Calu3 (cell line): ENCODE measurements at regions of chr3 and their contacts with region 1.

Region 1: GRCh38 chr3:48465531-48466378 is 19.2 kb downstream of the ATRIP start:
- DNase-seq: peak; percentile 97
- H3K4me3 Mint-ChIP-seq: peak overlapping the region; percentile 74
- H3K27ac Mint-ChIP-seq: peak overlapping the region; percentile 100
- H3K4me1 Mint-ChIP-seq: peaks cover 18% of the 10 kb centered on the region
- H3K27me3 Mint-ChIP-seq: no peaks in the 10 kb centered on the region
- CTCF ChIP-seq: peak; percentile 73

Region 2: DNA sequence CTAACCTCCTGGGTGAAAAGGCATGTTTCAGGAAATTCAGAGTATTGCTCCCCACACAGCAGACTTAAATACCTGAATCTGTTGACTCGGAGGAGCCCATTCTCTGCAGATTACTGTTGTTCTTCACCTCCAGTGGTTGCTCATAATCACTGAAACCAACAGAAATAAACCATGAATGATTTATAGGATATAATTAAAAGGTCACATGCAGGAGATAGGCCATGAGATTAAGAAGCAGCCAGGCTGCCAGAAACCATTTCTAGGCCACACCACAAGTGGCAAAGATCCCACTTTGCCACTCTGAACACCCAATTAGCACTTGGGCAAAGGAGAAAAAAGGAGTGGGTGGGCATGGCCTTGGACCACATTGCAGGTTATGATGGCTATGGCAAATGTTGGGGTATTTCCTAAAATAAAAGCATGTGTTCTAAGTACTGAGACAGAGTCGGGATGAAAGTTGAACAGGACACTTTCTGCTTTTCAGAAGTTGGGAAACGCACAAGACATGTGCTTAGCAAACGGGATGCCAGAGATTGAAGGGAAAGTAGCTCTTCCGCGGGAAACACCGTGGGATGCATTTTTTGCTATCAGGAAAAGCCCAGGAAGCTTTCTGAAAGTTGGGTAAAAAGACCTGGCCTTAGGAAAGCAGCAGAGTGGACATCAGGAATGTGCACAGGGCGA is 279.0 kb before region 1 on chr3:
- CTCF ChIA-PET with region 1: no interaction called
- intact Hi-C with region 1: no loop called
- DNase-seq: no peak
- H3K4me3 Mint-ChIP-seq: peak overlapping the region; percentile 97
- H3K27ac Mint-ChIP-seq: peak overlapping the region; percentile 93
- H3K4me1 Mint-ChIP-seq: peaks cover 38% of the 10 kb centered on the region
- H3K27me3 Mint-ChIP-seq: no peaks in the 10 kb centered on the region
- CTCF ChIP-seq: no peak

Region 3: DNA sequence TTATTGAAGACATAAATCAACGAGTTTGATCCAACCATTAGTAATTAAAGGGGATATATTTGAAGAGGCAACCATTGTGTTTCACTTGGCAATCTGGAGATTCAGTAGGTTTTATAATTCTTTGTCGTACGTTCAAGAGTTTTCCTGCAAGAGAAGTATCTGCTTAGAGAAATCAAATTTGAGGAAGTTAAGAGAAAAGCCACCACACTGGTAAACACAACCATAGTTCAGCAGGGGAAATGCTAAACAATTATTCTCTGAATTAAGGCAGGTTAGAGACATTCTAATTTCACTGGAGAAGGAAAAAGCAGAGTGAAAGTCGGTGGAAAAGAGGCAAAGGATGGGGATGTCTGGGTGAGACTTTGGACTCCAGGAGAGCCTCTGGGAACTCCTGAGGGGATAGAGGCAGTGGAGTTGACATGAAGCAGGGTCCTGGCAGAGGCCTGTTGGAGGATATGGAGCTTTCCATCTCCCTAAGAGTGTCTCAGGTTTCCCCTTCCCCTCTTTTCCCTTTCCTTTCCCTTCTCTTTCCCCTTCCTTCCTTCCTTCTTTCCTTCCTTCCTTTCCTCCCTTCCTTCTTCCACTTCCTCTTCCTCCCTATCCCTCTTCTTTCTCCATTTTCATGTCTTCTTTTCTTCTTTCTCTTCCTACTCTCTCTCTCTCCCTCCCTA is 158.8 kb before region 1 on chr3:
- CTCF ChIA-PET with region 1: interaction called, 17 read pairs
- intact Hi-C with region 1: no loop called
- DNase-seq: no peak
- H3K4me3 Mint-ChIP-seq: no peak overlapping the region
- H3K27ac Mint-ChIP-seq: no peak overlapping the region
- H3K4me1 Mint-ChIP-seq: peaks cover 10% of the 10 kb centered on the region
- H3K27me3 Mint-ChIP-seq: peaks cover 37% of the 10 kb centered on the region
- CTCF ChIP-seq: no peak

Region 4: GRCh38 chr3:48435774-48436476 is 29.8 kb before region 1 on chr3:
- CTCF ChIA-PET with region 1: no interaction called
- intact Hi-C with region 1: no loop called
- DNase-seq: peak; percentile 87
- H3K4me3 Mint-ChIP-seq: no peak overlapping the region
- H3K27ac Mint-ChIP-seq: no peak overlapping the region
- H3K4me1 Mint-ChIP-seq: peaks cover 37% of the 10 kb centered on the region
- H3K27me3 Mint-ChIP-seq: no peaks in the 10 kb centered on the region
- CTCF ChIP-seq: peak; percentile 93

Region 5: GRCh38 chr3:48548729-48549705 is 83.3 kb after region 1 on chr3:
- CTCF ChIA-PET with region 1: interaction called, 5 read pairs
- intact Hi-C with region 1: loop called (anchors 1 kb)
- DNase-seq: peak; percentile 88
- H3K4me3 Mint-ChIP-seq: no peak overlapping the region
- H3K27ac Mint-ChIP-seq: no peak overlapping the region
- H3K4me1 Mint-ChIP-seq: no peaks in the 10 kb centered on the region
- H3K27me3 Mint-ChIP-seq: no peaks in the 10 kb centered on the region
- CTCF ChIP-seq: peak; percentile 89